IMR-90 (cell line): ENCODE measurements at regions of chr13 and their contacts with region 1.

Region 1: DNA sequence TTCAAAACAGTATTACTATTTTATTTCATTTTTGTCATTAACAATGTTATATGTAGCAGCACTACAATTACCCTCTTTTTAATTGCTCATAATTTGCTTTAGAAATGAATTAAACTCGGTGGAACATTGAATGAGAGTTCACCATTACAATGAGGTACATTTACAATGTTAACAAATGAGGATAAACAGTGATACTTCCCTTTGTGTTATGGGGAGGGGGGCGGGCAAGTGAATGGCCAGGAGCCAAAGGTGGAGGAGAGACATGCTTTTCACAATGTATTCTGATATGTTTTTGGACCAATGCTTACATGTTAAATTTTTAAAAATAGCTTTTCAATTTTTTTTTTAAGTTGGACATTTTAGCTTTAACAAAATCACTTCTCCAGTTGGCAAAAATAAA is 34.2 kb downstream of the NALCN start:
- DNase-seq: no peak
- ATAC-seq: no peak
- H3K4me3 ChIP-seq: no peak overlapping the region
- H3K27ac ChIP-seq: no peak overlapping the region
- H3K4me1 ChIP-seq: 0 out of 2 replicates have a peak, but pooled peaks cover 2% of the 10 kb centered on the region
- H3K27me3 ChIP-seq: no peaks in the 10 kb centered on the region
- CTCF ChIP-seq: no peak
- POLR2A ChIP-seq: no peak
- RAD21 ChIP-seq: no peak

Region 2: GRCh38 chr13:101211261-101211660 is 170.8 kb before region 1 on chr13:
- CTCF ChIA-PET with region 1: no interaction called
- POLR2A ChIA-PET with region 1: no interaction called
- dilution Hi-C with region 1: no loop called
- in situ Hi-C with region 1: no loop called
- intact Hi-C with region 1: loop called (anchors 1 kb)
- DNase-seq: peak; percentile 72
- ATAC-seq: peak; percentile 59
- H3K4me3 ChIP-seq: no peak overlapping the region
- H3K27ac ChIP-seq: no peak overlapping the region
- H3K4me1 ChIP-seq: no peaks in the 10 kb centered on the region
- H3K27me3 ChIP-seq: no peaks in the 10 kb centered on the region
- CTCF ChIP-seq: no peak
- POLR2A ChIP-seq: no peak
- RAD21 ChIP-seq: no peak

Region 3: GRCh38 chr13:101341464-101341863 is 40.6 kb before region 1 on chr13:
- CTCF ChIA-PET with region 1: no interaction called
- POLR2A ChIA-PET with region 1: no interaction called
- dilution Hi-C with region 1: no loop called
- in situ Hi-C with region 1: no loop called
- intact Hi-C with region 1: loop called (anchors 5 kb)
- DNase-seq: peak; percentile 12
- ATAC-seq: no peak; the same call in 1 of the 2 replicates
- H3K4me3 ChIP-seq: no peak overlapping the region
- H3K27ac ChIP-seq: no peak overlapping the region
- H3K4me1 ChIP-seq: no peaks in the 10 kb centered on the region
- H3K27me3 ChIP-seq: no peaks in the 10 kb centered on the region
- CTCF ChIP-seq: no peak
- POLR2A ChIP-seq: no peak
- RAD21 ChIP-seq: no peak

Region 4: DNA sequence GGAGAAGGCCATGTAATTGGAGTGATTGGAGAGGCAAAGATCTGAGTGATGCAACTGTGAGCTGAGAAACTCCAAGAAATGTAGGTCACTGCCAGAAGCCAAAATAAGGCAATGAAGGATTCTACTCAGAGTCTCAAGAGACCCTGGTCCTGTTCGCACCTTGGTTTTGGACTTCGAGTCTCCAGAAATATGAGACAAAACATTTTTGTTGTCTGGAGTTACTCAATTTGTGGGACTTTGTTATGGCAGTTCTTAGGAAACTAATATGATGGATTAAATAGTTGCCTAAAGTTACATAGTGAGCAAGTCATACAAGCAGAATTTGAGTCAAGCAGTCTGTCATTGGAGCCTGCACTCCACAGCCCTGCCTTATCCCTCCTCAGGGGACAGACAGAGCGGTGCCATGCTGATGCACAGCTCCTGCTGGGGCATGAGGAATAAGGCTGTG is 174.6 kb after region 1 on chr13:
- CTCF ChIA-PET with region 1: no interaction called
- POLR2A ChIA-PET with region 1: no interaction called
- dilution Hi-C with region 1: no loop called
- in situ Hi-C with region 1: no loop called
- intact Hi-C with region 1: no loop called
- DNase-seq: peak; percentile 7
- ATAC-seq: peak; percentile 78
- H3K4me3 ChIP-seq: no peak overlapping the region
- H3K27ac ChIP-seq: no peak overlapping the region
- H3K4me1 ChIP-seq: peaks cover 4% of the 10 kb centered on the region
- H3K27me3 ChIP-seq: no peaks in the 10 kb centered on the region
- CTCF ChIP-seq: no peak
- POLR2A ChIP-seq: no peak
- RAD21 ChIP-seq: no peak

Region 5: GRCh38 chr13:101711307-101712025 is 329.4 kb after region 1 on chr13:
- CTCF ChIA-PET with region 1: no interaction called
- POLR2A ChIA-PET with region 1: no interaction called
- dilution Hi-C with region 1: no loop called
- in situ Hi-C with region 1: no loop called
- intact Hi-C with region 1: no loop called
- DNase-seq: no peak
- ATAC-seq: no peak
- H3K4me3 ChIP-seq: no peak overlapping the region
- H3K27ac ChIP-seq: no peak overlapping the region
- H3K4me1 ChIP-seq: no peaks in the 10 kb centered on the region
- H3K27me3 ChIP-seq: no peaks in the 10 kb centered on the region
- CTCF ChIP-seq: no peak
- POLR2A ChIP-seq: no peak
- RAD21 ChIP-seq: no peak

Region 6: DNA sequence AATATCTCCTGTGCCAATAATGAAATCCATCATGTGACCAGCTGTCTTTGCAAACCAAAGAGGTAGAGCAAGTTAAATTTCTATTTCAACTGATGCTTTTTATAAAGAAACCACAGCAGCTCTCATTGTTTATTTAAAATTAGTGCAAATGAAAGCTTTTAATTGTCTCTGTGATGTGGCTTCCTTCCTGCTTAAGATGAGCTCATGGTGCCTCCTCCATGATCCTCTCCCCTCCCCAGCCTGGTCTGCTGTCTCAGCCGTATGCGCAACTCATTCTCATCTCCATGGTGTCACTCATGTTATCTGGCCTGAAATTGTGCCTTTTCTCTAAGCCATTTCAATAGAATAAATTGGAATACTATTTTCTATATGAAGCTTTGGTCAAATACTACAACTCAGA is 749.2 kb after region 1 on chr13:
- CTCF ChIA-PET with region 1: no interaction called
- POLR2A ChIA-PET with region 1: no interaction called
- dilution Hi-C with region 1: no loop called
- in situ Hi-C with region 1: no loop called
- intact Hi-C with region 1: no loop called
- DNase-seq: no peak
- ATAC-seq: no peak
- H3K4me3 ChIP-seq: no peak overlapping the region
- H3K27ac ChIP-seq: no peak overlapping the region
- H3K4me1 ChIP-seq: no peaks in the 10 kb centered on the region
- H3K27me3 ChIP-seq: no peaks in the 10 kb centered on the region
- CTCF ChIP-seq: no peak
- POLR2A ChIP-seq: no peak
- RAD21 ChIP-seq: no peak